Mammary epithelial cell (primary cell): ENCODE measurements at regions of chr4 and their contacts with region 1.

Region 1: GRCh38 chr4:10204401-10205058 is 87.9 kb upstream of the WDR1 start:
- DNase-seq: no peak
- H3K4me3 ChIP-seq: no peak overlapping the region
- H3K27ac ChIP-seq: no peak overlapping the region
- H3K4me1 ChIP-seq: no peaks in the 10 kb centered on the region
- H3K27me3 ChIP-seq: no peaks in the 10 kb centered on the region
- CTCF ChIP-seq: no peak

Region 2: DNA sequence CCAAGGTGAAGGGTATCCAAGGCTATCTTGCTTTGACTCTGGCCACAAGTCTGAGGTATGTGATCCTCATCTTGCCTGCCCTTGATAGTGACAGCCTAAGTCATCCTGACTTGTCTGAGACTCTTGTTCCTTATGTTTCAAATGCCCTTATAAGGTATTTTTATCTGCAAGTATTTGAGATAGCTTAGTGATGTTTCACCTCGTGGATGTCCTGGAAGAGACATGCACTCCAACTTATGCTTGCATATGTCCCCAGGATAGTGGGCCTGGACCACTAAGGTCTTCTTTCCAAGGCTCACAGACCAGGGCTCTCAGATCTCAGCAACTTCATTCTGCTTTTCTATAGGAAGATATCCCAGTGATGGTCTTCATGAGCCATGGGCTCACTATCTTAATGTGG is 32.6 kb after region 1 on chr4:
- CTCF ChIA-PET with region 1: no interaction called
- dilution Hi-C with region 1: no loop called
- in situ Hi-C with region 1: no loop called
- intact Hi-C with region 1: loop called (anchors 1 kb)
- DNase-seq: no peak
- H3K4me3 ChIP-seq: no peak overlapping the region
- H3K27ac ChIP-seq: no peak overlapping the region
- H3K4me1 ChIP-seq: no peaks in the 10 kb centered on the region
- H3K27me3 ChIP-seq: no peaks in the 10 kb centered on the region
- CTCF ChIP-seq: no peak

Region 3: GRCh38 chr4:10640561-10641201 is 436.2 kb after region 1 on chr4:
- CTCF ChIA-PET with region 1: no interaction called
- dilution Hi-C with region 1: no loop called
- in situ Hi-C with region 1: no loop called
- intact Hi-C with region 1: no loop called
- DNase-seq: peak; percentile 56
- H3K4me3 ChIP-seq: no peak overlapping the region
- H3K27ac ChIP-seq: no peak overlapping the region
- H3K4me1 ChIP-seq: peaks cover 19% of the 10 kb centered on the region
- H3K27me3 ChIP-seq: no peaks in the 10 kb centered on the region
- CTCF ChIP-seq: no peak